ENCODE measurements at regions of chr3 and their contacts with region 1.

Region 1: DNA sequence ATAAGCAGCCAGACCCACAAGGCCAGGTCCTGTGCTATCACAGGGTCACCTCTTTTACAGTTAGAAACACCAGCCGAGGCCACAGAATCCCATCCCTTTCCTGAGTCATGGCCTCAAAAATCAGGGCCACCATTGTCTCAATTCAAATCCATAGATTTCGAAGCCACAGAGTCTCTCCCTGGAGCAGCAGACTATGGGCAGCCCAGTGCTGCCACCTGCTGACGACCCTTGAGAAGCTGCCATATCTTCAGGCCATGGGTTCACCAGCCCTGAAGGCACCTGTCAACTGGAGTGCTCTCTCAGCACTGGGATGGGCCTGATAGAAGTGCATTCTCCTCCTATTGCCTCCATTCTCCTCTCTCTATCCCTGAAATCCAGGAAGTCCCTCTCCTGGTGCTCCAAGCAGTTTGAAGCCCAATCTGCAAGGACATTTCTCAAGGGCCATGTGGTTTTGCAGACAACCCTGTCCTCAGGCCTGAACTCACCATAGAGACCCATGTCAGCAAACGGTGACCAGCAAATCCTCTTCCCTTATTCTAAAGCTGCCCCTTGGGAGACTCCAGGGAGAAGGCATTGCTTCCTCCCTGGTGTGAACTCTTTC is 39.6 kb downstream of the TGM4 start:
- DNase-seq: peak; percentile 78
- H3K4me3 Mint-ChIP-seq: no peak overlapping the region
- H3K27ac Mint-ChIP-seq: no peak overlapping the region
- H3K4me1 Mint-ChIP-seq: no peaks in the 10 kb centered on the region
- H3K27me3 Mint-ChIP-seq: no peaks in the 10 kb centered on the region
- CTCF ChIP-seq: peak; percentile 62

Region 2: GRCh38 chr3:44833394-44833793 is 80.6 kb before region 1 on chr3:
- CTCF ChIA-PET with region 1: no interaction called
- intact Hi-C with region 1: loop called (anchors 10 kb)
- DNase-seq: no peak
- H3K4me3 Mint-ChIP-seq: no peak overlapping the region
- H3K27ac Mint-ChIP-seq: no peak overlapping the region
- H3K4me1 Mint-ChIP-seq: no peaks in the 10 kb centered on the region
- H3K27me3 Mint-ChIP-seq: no peaks in the 10 kb centered on the region
- CTCF ChIP-seq: no peak

Region 3: GRCh38 chr3:44883999-44884431 is 30.0 kb before region 1 on chr3:
- CTCF ChIA-PET with region 1: no interaction called
- intact Hi-C with region 1: loop called (anchors 2 kb)
- DNase-seq: peak; percentile 68
- H3K4me3 Mint-ChIP-seq: peak overlapping the region; percentile 12
- H3K27ac Mint-ChIP-seq: peak overlapping the region; percentile 74
- H3K4me1 Mint-ChIP-seq: peaks cover 34% of the 10 kb centered on the region
- H3K27me3 Mint-ChIP-seq: no peaks in the 10 kb centered on the region
- CTCF ChIP-seq: no peak

Region 4: GRCh38 chr3:45199837-45200648 is 286.1 kb after region 1 on chr3:
- CTCF ChIA-PET with region 1: no interaction called
- intact Hi-C with region 1: no loop called
- DNase-seq: peak; percentile 62
- H3K4me3 Mint-ChIP-seq: peak overlapping the region; percentile 12
- H3K27ac Mint-ChIP-seq: peak overlapping the region; percentile 43
- H3K4me1 Mint-ChIP-seq: peaks cover 23% of the 10 kb centered on the region
- H3K27me3 Mint-ChIP-seq: peaks cover 18% of the 10 kb centered on the region
- CTCF ChIP-seq: no peak

Measured in Calu3 (cell line).